ENCODE measurements at regions of chr4 and their contacts with region 1.

Region 1: GRCh38 chr4:139734875-139735380 is 69.3 kb downstream of the MGST2 start:
- DNase-seq: peak; percentile 64
- H3K4me3 ChIP-seq: peak overlapping the region; percentile 35 to 36 (median 35)
- H3K27ac ChIP-seq: no peak overlapping the region
- H3K4me1 ChIP-seq: peaks cover 9% of the 10 kb centered on the region
- H3K27me3 ChIP-seq: peaks cover 12% of the 10 kb centered on the region
- CTCF ChIP-seq: peak; percentile 22 to 67

Region 2: GRCh38 chr4:140012688-140013486 is 278.0 kb after region 1 on chr4:
- CTCF ChIA-PET with region 1: no interaction called
- dilution Hi-C with region 1: no loop called
- in situ Hi-C with region 1: no loop called
- intact Hi-C with region 1: loop called (anchors 10 kb)
- DNase-seq: peak; percentile 71
- H3K4me3 ChIP-seq: no peak overlapping the region
- H3K27ac ChIP-seq: no peak overlapping the region
- H3K4me1 ChIP-seq: no peaks in the 10 kb centered on the region
- H3K27me3 ChIP-seq: peaks cover 2% of the 10 kb centered on the region
- CTCF ChIP-seq: peak; percentile 62 to 64

Region 3: DNA sequence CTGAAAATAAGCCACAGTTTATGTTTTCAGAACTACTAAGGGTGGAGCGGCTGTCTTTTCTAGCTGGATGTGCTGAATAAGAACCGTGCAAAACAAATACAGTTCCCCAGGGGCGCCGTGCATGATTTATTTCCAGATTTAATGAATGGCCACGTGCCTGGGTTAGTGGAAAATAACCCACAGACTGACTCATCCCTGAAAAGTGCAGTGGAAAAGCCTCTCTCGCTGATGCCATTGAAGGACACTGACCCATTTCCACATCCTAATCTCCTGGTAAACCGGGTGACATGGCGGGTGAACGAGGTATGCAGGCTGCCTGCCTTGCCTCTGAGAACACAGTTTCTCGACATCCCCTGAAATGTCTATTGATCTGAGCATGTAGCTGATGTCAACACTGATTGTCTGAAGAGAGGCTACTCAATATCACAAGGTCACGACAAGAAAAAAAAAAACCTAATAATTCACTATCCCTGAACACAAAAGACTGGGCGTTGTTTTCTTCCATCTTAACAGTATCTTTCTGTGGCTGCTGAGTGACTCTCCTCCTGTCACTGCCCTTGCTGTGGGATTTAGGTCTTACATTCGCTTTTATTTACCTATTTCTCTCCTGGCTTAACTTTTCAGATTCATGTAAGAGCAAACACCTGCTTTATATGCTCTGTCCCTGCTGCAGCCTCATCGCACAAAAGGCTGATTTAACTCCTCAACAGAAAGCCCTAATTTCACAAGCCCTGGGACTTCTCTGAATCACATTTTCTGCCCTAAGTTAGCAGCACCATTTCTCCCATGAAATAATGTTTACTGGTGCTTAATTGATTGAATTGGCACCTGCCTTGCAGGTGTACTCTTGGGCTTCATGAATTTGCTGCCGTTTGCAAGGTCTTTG is 561.6 kb after region 1 on chr4:
- CTCF ChIA-PET with region 1: interaction called, 10 read pairs
- dilution Hi-C with region 1: no loop called
- in situ Hi-C with region 1: no loop called
- intact Hi-C with region 1: no loop called
- DNase-seq: peak; percentile 42
- H3K4me3 ChIP-seq: no peak overlapping the region
- H3K27ac ChIP-seq: no peak overlapping the region
- H3K4me1 ChIP-seq: peaks cover 30% of the 10 kb centered on the region
- H3K27me3 ChIP-seq: no peaks in the 10 kb centered on the region
- CTCF ChIP-seq: no peak

Measured in mammary epithelial cell (primary cell).